CD4-positive, alpha-beta T cell (primary cell): ENCODE measurements at regions of chr6 and their contacts with region 1.

Region 1: DNA sequence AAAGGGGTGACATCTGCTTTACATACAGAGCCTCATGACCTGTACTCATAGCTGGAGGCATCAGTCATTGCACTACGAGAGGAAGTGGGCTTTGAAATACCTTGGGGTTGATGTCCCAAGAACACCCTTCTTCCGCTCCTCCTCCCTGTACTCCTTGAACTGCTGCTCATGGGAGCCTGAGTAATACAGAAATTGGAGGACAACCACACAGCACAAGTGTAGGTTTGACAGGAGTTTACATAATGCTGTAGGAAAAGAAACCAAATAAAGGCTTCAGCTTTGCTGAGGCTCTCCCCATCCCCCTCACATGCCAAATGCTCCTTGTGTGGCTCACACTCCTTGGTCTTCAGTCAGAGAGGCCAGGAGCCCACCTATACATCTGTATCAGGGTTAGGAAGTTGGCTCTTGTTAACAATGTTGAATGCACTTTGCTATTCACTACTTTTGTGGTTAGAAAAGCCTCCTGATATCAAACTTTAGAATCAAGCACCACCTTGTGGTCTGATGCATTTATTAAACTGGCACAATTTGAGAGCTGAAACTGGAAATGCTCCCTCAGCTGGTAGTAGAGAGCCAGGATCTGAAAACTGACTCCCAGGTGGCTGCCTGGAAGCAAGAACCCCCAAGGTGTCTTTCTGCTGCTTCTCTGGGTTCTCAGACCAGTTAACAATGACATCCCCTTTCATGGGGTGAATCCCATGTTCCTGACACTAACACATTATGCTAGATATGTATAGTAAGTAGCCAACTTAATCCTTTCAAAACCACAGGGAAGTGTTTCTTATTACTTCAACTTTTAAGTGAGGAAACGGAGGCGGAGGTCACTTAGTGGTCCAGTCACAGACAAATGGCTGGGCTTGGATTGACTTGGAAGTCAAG is 56.2 kb upstream of the EDN1 start:
- DNase-seq: peak in 10 of 14 experiments; percentile 8 to 80 (median 18)
- ATAC-seq: peak; percentile 81
- H3K4me3 ChIP-seq: no peak overlapping the region
- H3K4me3 Mint-ChIP-seq: no peak overlapping the region
- H3K27ac ChIP-seq: no peak overlapping the region
- H3K27ac Mint-ChIP-seq: no peak overlapping the region
- H3K4me1 ChIP-seq: peaks cover 15% of the 10 kb centered on the region
- H3K4me1 Mint-ChIP-seq: peaks cover 22% of the 10 kb centered on the region
- H3K27me3 ChIP-seq: no peaks in the 10 kb centered on the region
- H3K27me3 Mint-ChIP-seq: no peaks in the 10 kb centered on the region
- CTCF ChIP-seq: peak; percentile 78

Region 2: GRCh38 chr6:11585426-11586016 is 648.4 kb before region 1 on chr6:
- CTCF ChIA-PET with region 1: interaction called, 3 read pairs
- POLR2A ChIA-PET with region 1: no interaction called
- intact Hi-C with region 1: loop called in 1 of 2 experiments (anchors 5 kb)
- DNase-seq: peak in 3 of 14 experiments; percentile 18 to 37 (median 35)
- ATAC-seq: no peak
- H3K4me3 ChIP-seq: no peak overlapping the region
- H3K4me3 Mint-ChIP-seq: no peak overlapping the region
- H3K27ac ChIP-seq: no peak overlapping the region
- H3K27ac Mint-ChIP-seq: no peak overlapping the region
- H3K4me1 ChIP-seq: no peaks in the 10 kb centered on the region
- H3K4me1 Mint-ChIP-seq: no peaks in the 10 kb centered on the region
- H3K27me3 ChIP-seq: no peaks in the 10 kb centered on the region
- H3K27me3 Mint-ChIP-seq: no peaks in the 10 kb centered on the region
- CTCF ChIP-seq: peak; percentile 50

Region 3: GRCh38 chr6:11700118-11700718 is 533.7 kb before region 1 on chr6:
- CTCF ChIA-PET with region 1: interaction called, 5 read pairs
- POLR2A ChIA-PET with region 1: interaction called, 3 read pairs
- intact Hi-C with region 1: loop called (anchors 1 to 2 kb)
- DNase-seq: peak in 4 of 14 experiments; percentile 40 to 70 (median 63)
- ATAC-seq: no peak
- H3K4me3 ChIP-seq: no peak overlapping the region
- H3K4me3 Mint-ChIP-seq: no peak overlapping the region
- H3K27ac ChIP-seq: no peak overlapping the region
- H3K27ac Mint-ChIP-seq: no peak overlapping the region
- H3K4me1 ChIP-seq: peaks cover 2% of the 10 kb centered on the region
- H3K4me1 Mint-ChIP-seq: peaks cover 17% of the 10 kb centered on the region
- H3K27me3 ChIP-seq: no peaks in the 10 kb centered on the region
- H3K27me3 Mint-ChIP-seq: no peaks in the 10 kb centered on the region
- CTCF ChIP-seq: peak; percentile 67

Region 4: DNA sequence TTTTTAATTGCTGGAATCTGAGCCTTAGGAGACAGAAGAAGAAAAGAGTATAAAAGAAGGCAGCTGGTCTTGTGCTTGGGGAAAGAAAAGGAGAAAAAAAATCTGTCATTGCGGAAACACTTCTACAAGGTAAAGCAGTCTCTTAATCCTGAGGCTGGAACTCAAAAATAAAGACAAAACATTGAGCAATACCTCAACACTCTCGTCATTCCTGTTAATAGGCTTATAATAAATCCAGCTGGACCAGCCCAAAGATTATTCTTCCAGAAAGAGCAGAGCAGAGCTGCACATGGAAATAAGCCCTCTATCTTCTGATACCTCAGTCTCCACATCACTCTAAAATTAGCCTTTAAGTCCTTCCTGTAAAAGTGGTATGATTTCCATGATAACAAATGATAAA is 283.8 kb before region 1 on chr6:
- CTCF ChIA-PET with region 1: no interaction called
- POLR2A ChIA-PET with region 1: no interaction called
- intact Hi-C with region 1: loop called in 1 of 2 experiments (anchors 10 kb)
- DNase-seq: no peak
- ATAC-seq: no peak
- H3K4me3 ChIP-seq: no peak overlapping the region
- H3K4me3 Mint-ChIP-seq: no peak overlapping the region
- H3K27ac ChIP-seq: no peak overlapping the region
- H3K27ac Mint-ChIP-seq: no peak overlapping the region
- H3K4me1 ChIP-seq: no peaks in the 10 kb centered on the region
- H3K4me1 Mint-ChIP-seq: no peaks in the 10 kb centered on the region
- H3K27me3 ChIP-seq: no peaks in the 10 kb centered on the region
- H3K27me3 Mint-ChIP-seq: no peaks in the 10 kb centered on the region
- CTCF ChIP-seq: no peak

Region 5: GRCh38 chr6:12150812-12151432 is 83.0 kb before region 1 on chr6:
- CTCF ChIA-PET with region 1: interaction called, 3 read pairs
- POLR2A ChIA-PET with region 1: no interaction called
- intact Hi-C with region 1: loop called (anchors 2 kb)
- DNase-seq: peak in 11 of 14 experiments; percentile 11 to 60 (median 26)
- ATAC-seq: no peak
- H3K4me3 ChIP-seq: no peak overlapping the region
- H3K4me3 Mint-ChIP-seq: no peak overlapping the region
- H3K27ac ChIP-seq: no peak overlapping the region
- H3K27ac Mint-ChIP-seq: no peak overlapping the region
- H3K4me1 ChIP-seq: no peaks in the 10 kb centered on the region
- H3K4me1 Mint-ChIP-seq: peaks cover 15% of the 10 kb centered on the region
- H3K27me3 ChIP-seq: no peaks in the 10 kb centered on the region
- H3K27me3 Mint-ChIP-seq: no peaks in the 10 kb centered on the region
- CTCF ChIP-seq: peak; percentile 41